B cell (primary cell): ENCODE measurements at regions of chr6 and their contacts with region 1.

Region 1: GRCh38 chr6:146700078-146700686 is 101.4 kb downstream of the ADGB start:
- DNase-seq: peak; percentile 26
- ATAC-seq: no peak
- H3K4me3 ChIP-seq: no peak overlapping the region
- H3K4me3 Mint-ChIP-seq: no peak overlapping the region
- H3K27ac ChIP-seq: no peak overlapping the region
- H3K27ac Mint-ChIP-seq: no peak overlapping the region
- H3K4me1 ChIP-seq: no peaks in the 10 kb centered on the region
- H3K4me1 Mint-ChIP-seq: no peaks in the 10 kb centered on the region
- H3K27me3 ChIP-seq: no peaks in the 10 kb centered on the region
- H3K27me3 Mint-ChIP-seq: no peaks in the 10 kb centered on the region
- CTCF ChIP-seq: peak; percentile 69

Region 2: DNA sequence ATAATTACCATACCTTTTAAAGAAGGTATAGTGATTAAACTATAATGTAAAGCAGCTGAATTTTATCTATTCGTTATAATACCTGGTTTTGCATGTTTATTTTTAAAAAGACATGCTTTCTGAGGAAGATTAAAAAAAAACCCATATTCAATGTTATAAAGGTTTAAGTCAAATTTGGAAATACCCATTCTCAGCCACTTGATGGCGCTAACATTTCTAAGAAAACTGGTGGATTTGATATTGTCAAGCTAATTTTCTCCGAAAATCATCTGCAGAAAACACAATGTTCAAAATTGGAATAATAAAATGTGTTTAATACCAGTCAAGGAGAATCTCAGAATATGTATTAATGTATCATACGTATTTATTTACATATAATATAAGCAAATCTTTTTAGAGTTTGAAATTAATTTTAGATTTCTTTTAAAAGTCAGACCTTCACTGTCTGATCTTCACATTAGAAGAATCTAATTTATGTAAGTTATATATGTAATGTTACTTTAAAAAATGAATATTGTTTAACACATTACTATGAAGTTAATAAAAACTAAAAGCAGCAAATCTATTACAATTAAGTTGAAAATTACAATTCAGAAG is 771.0 kb before region 1 on chr6:
- CTCF ChIA-PET with region 1: interaction called, 15 read pairs
- POLR2A ChIA-PET with region 1: no interaction called
- intact Hi-C with region 1: no loop called
- DNase-seq: peak; percentile 40
- ATAC-seq: no peak
- H3K4me3 ChIP-seq: no peak overlapping the region
- H3K4me3 Mint-ChIP-seq: no peak overlapping the region
- H3K27ac ChIP-seq: no peak overlapping the region
- H3K27ac Mint-ChIP-seq: no peak overlapping the region
- H3K4me1 ChIP-seq: no peaks in the 10 kb centered on the region
- H3K4me1 Mint-ChIP-seq: no peaks in the 10 kb centered on the region
- H3K27me3 ChIP-seq: no peaks in the 10 kb centered on the region
- H3K27me3 Mint-ChIP-seq: no peaks in the 10 kb centered on the region
- CTCF ChIP-seq: peak; percentile 95

Region 3: DNA sequence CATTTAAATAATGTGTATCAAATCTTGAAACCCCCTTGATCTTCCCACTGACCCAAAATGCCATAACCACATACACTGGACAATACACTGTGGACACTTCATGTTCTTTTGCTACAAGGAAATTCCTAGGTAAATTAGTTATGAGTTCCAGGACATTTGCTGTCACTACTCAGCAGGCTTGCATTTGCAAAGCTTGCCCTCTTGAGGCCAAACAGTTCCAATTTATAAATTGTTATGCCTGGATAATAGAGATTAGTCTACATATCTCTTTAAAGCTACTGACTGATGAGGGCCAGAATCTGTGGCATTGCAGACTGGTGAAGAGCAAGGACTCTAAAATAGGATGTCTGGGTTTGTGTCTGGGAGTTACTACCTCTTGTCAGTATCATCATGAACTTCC is 174.0 kb before region 1 on chr6:
- CTCF ChIA-PET with region 1: no interaction called
- POLR2A ChIA-PET with region 1: no interaction called
- intact Hi-C with region 1: no loop called
- DNase-seq: no peak
- ATAC-seq: no peak
- H3K4me3 ChIP-seq: no peak overlapping the region
- H3K4me3 Mint-ChIP-seq: no peak overlapping the region
- H3K27ac ChIP-seq: no peak overlapping the region
- H3K27ac Mint-ChIP-seq: no peak overlapping the region
- H3K4me1 ChIP-seq: no peaks in the 10 kb centered on the region
- H3K4me1 Mint-ChIP-seq: no peaks in the 10 kb centered on the region
- H3K27me3 ChIP-seq: no peaks in the 10 kb centered on the region
- H3K27me3 Mint-ChIP-seq: no peaks in the 10 kb centered on the region
- CTCF ChIP-seq: no peak